Adrenal gland (tissue), 19 donors: ENCODE measurements at regions of chr7 and their contacts with region 1.

Region 1: GRCh38 chr7:148084138-148084537 is 506.4 kb upstream of the C7orf33 start:
- DNase-seq: peak; percentile 57 to 83 (median 65)
- H3K4me3 ChIP-seq: no peak overlapping the region
- H3K27ac ChIP-seq: no peak overlapping the region
- H3K4me1 ChIP-seq: no peaks in the 10 kb centered on the region
- H3K27me3 ChIP-seq: no peaks in the 10 kb centered on the region
- CTCF ChIP-seq: peak; percentile 41 to 72 (median 64)
- POLR2A ChIP-seq: no peak

Region 2: GRCh38 chr7:147245292-147245691 is 838.8 kb before region 1 on chr7:
- intact Hi-C with region 1: loop called in 1 of 2 experiments (anchors 10 kb)
- DNase-seq: peak; percentile 18 to 61 (median 33)
- H3K4me3 ChIP-seq: no peak overlapping the region
- H3K27ac ChIP-seq: no peak overlapping the region
- H3K4me1 ChIP-seq: no peaks in the 10 kb centered on the region
- H3K27me3 ChIP-seq: no peaks in the 10 kb centered on the region
- CTCF ChIP-seq: peak; percentile 28 to 58 (median 46)
- POLR2A ChIP-seq: no peak

Region 3: DNA sequence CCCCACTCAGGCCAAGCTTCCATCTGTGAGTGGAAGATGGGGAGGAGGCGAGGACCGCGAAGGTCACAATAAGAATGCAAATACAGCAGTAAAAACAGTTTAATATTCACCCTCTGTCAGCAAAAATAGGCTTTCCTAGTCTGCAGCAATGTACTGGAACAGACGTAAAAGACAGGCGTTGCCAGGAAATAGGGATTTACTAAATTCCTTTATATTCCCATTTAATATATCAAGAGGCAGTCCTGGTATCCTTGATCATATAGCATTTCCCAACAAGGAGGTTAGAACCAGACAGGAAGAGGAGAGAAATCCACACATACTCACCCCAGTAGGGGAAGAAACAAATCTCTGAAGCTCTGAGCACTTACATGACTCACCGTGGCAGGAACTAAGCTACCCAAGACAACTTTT is 548.4 kb before region 1 on chr7:
- intact Hi-C with region 1: loop called in 1 of 2 experiments (anchors 10 kb)
- DNase-seq: no peak
- H3K4me3 ChIP-seq: no peak overlapping the region
- H3K27ac ChIP-seq: no peak overlapping the region
- H3K4me1 ChIP-seq: no peaks in the 10 kb centered on the region
- H3K27me3 ChIP-seq: no peaks in the 10 kb centered on the region
- CTCF ChIP-seq: no peak
- POLR2A ChIP-seq: no peak

Region 4: GRCh38 chr7:147556317-147556716 is 527.8 kb before region 1 on chr7:
- intact Hi-C with region 1: loop called in 1 of 2 experiments (anchors 10 kb)
- DNase-seq: no peak
- H3K4me3 ChIP-seq: no peak overlapping the region
- H3K27ac ChIP-seq: no peak overlapping the region
- H3K4me1 ChIP-seq: no peaks in the 10 kb centered on the region
- H3K27me3 ChIP-seq: no peaks in the 10 kb centered on the region
- CTCF ChIP-seq: no peak
- POLR2A ChIP-seq: no peak